A673 (cell line): ENCODE measurements at regions of chr3 and their contacts with region 1.

Region 1: GRCh38 chr3:179196098-179196497 is 47.9 kb downstream of the PIK3CA start:
- DNase-seq: peak; percentile 14
- H3K4me3 ChIP-seq: no peak overlapping the region
- H3K27ac ChIP-seq: no peak overlapping the region
- H3K4me1 ChIP-seq: no peaks in the 10 kb centered on the region
- H3K27me3 ChIP-seq: no peaks in the 10 kb centered on the region
- CTCF ChIP-seq: no peak

Region 2: DNA sequence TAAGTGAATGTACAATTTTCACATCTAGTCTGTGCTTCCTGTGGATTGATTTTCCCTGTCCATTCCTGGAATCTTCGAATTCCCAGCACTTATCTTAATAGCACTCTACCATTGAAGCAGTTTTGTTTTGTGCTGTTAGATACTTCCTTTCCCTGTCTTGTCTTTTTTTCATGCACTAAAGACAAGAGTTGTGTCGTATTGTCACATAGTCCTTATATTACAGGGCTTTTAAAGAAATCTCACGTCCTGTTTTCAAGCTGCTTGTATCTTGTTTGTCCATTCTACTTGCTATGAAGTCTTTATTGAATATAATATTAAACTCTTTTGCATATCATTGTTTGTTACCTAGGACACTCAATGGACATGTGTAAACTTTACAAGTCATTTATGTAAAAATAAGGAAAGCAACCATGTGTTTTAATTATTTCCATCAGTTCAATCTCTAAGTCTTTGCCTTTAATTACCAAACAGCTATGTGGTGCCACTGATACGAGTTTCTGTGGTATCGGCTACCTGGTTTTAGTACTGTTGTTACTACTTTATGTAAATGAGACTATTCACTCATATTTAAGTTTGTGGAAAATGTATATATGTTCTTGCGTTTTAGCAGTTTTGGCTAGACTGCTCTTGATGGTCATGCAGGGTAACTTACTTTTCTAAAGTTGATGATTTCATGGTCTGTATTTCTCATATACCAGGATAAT is 37.6 kb before region 1 on chr3:
- CTCF ChIA-PET with region 1: no interaction called
- POLR2A ChIA-PET with region 1: no interaction called
- intact Hi-C with region 1: loop called (anchors 2 kb)
- DNase-seq: no peak
- H3K4me3 ChIP-seq: no peak overlapping the region
- H3K27ac ChIP-seq: no peak overlapping the region
- H3K4me1 ChIP-seq: no peaks in the 10 kb centered on the region
- H3K27me3 ChIP-seq: no peaks in the 10 kb centered on the region
- CTCF ChIP-seq: no peak

Region 3: DNA sequence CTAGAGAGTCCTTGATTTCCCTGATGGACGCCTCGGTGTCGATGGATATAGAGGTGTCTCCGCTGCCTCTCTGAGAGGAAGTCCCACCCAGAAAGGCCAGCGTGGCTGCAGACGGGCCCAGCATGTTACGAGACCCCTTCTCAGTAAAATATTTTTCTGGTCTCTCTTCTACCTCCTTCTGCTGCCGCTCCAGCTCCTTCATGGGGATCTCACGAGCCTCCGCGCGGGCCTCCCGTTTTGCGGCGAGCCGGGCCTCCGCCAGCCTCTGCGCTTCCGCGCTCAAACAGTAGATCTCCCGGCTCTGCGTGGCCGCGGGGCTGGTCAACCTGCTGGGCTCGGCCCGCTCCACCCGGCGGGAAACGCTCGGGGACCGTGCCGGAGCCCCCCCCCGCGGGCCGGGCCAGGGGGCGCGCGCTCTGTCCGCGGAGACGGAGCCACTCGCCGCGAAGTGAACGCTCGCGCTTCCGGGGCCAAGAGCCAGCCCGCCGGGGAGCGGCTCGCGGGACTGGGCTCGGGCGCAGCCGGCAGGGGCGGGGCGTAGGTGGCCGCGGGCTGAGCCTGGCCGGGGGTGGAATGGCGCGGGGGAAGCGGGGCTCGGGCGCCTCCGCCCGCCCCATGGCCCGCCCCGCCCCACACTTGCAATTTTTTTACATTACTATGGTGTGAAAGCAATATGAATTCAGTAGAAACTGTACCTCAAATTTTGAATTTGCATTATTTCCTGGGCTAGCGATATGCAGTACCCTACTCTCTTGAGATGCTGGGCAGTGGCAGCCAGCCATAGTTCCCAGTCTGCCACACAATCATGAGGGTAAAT is 65.1 kb after region 1 on chr3:
- CTCF ChIA-PET with region 1: no interaction called
- POLR2A ChIA-PET with region 1: no interaction called
- intact Hi-C with region 1: no loop called
- DNase-seq: peak; percentile 82
- H3K4me3 ChIP-seq: peak overlapping the region; percentile 63
- H3K27ac ChIP-seq: peak overlapping the region; percentile 70
- H3K4me1 ChIP-seq: no peaks in the 10 kb centered on the region
- H3K27me3 ChIP-seq: no peaks in the 10 kb centered on the region
- CTCF ChIP-seq: no peak